ENCODE measurements at regions of chr5 and their contacts with region 1.

Region 1: DNA sequence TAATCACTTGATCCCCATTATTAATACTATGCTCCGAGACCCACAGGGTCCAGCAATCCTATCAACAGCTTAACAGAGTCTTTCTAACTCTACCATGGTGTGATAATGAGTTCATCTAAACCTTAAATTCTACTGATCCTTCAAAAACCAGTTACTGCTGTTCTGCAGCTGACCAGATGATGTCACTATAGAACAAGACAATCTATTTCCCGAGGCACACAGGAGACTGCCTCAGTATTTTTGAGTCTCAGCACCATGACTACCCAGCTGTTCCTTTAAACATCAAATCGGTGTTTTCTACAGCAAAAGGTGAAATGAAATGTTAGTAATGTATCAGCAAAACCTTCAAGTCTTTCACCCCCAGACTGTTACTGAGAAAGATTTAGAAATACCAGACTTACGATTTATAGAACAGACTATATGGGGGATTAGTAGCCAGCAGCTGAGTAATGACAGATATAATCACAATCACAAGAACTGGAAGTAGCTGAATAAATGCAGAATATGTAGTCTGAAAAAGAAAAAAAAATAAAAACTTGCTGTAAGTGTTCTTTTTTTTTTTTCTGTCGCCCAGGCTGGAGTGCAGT is 16.9 kb downstream of the DNAJC18 start:
- DNase-seq: peak; percentile 6 to 73 (median 66)
- H3K4me3 ChIP-seq: no peak overlapping the region
- H3K4me3 Mint-ChIP-seq: no peak overlapping the region
- H3K27ac ChIP-seq: no peak overlapping the region
- H3K27ac Mint-ChIP-seq: peak overlapping the region in 5 of 8 donors; percentile 44 to 82 (median 56)
- H3K4me1 ChIP-seq: no peaks in the 10 kb centered on the region
- H3K4me1 Mint-ChIP-seq: peaks cover 3 to 6% (median 4%) of the 10 kb centered on the region in 3 donors
- H3K27me3 ChIP-seq: no peaks in the 10 kb centered on the region
- H3K27me3 Mint-ChIP-seq: peaks cover 0 to 2% of the 10 kb centered on the region in 2 donors

Region 2: DNA sequence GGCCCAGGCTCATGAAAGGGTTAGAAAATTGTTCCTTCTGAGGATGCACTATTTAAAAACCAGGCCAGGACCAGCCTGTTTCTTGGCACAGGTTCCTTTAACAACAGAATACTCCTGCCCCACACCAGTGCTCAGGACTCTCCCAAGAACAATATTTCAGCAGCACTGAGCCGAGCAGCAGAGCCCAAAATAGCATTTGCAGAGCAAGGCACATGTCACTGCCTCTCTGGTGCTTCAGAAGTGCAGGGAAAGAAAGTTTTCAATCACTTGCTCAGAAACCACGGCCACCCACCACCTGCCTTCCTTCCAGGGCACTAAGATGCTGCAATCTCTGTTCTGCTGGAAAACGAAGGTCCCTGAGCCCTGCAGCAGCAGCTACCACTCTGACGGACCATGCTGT is 301.9 kb before region 1 on chr5:
- CTCF ChIA-PET with region 1: no interaction called
- POLR2A ChIA-PET with region 1: no interaction called
- DNase-seq: no peak
- H3K4me3 ChIP-seq: no peak overlapping the region
- H3K4me3 Mint-ChIP-seq: no peak overlapping the region
- H3K27ac ChIP-seq: no peak overlapping the region
- H3K27ac Mint-ChIP-seq: no peak overlapping the region
- H3K4me1 ChIP-seq: no peaks in the 10 kb centered on the region
- H3K4me1 Mint-ChIP-seq: no peaks in the 10 kb centered on the region
- H3K27me3 ChIP-seq: no peaks in the 10 kb centered on the region
- H3K27me3 Mint-ChIP-seq: no peaks in the 10 kb centered on the region

Region 3: DNA sequence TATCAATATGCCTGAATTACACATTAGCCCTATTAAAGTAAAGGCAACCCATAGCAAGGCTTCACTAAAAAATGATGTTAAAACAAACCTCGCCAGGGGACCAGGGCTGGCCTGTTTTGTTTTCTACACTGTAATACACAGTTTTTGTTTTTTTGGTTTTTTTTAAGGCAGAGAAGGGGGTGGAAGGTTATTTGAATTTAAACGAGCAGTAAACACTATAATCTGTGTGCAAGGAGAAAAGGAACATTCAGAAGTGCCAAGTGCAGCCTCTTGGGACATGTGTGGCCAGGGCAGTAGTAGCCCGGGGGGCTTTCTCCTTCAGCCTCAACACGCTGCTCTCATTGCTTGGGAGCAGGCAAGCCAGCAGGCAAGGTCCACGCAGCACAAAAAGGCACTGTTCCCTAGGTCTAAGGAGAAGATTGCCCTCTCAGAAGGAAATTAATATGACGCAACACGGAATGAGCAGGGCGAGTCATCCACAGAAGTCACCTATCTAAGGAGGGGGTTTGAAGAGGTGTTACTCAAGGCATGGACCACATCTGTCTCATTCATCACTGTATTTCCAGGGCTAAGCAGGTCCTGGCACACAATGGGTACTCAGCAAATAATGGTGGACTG is 240.5 kb before region 1 on chr5:
- CTCF ChIA-PET with region 1: no interaction called
- POLR2A ChIA-PET with region 1: no interaction called
- DNase-seq: no peak
- H3K4me3 ChIP-seq: no peak overlapping the region
- H3K4me3 Mint-ChIP-seq: no peak overlapping the region
- H3K27ac ChIP-seq: no peak overlapping the region
- H3K27ac Mint-ChIP-seq: no peak overlapping the region
- H3K4me1 ChIP-seq: no peaks in the 10 kb centered on the region
- H3K4me1 Mint-ChIP-seq: peaks cover 4 to 15% (median 8%) of the 10 kb centered on the region in 3 donors
- H3K27me3 ChIP-seq: no peaks in the 10 kb centered on the region
- H3K27me3 Mint-ChIP-seq: no peaks in the 10 kb centered on the region

Region 4: GRCh38 chr5:139273572-139274289 is 148.7 kb before region 1 on chr5:
- CTCF ChIA-PET with region 1: no interaction called
- POLR2A ChIA-PET with region 1: no interaction called
- DNase-seq: peak; percentile 80 to 89 (median 86)
- H3K4me3 ChIP-seq: peak overlapping the region; percentile 89
- H3K4me3 Mint-ChIP-seq: peak overlapping the region; percentile 83 to 94 (median 89)
- H3K27ac ChIP-seq: peak overlapping the region; percentile 67
- H3K27ac Mint-ChIP-seq: peak overlapping the region; percentile 51 to 94 (median 78)
- H3K4me1 ChIP-seq: peaks cover 47% of the 10 kb centered on the region
- H3K4me1 Mint-ChIP-seq: peaks cover 48 to 62% (median 54%) of the 10 kb centered on the region in 3 donors
- H3K27me3 ChIP-seq: no peaks in the 10 kb centered on the region
- H3K27me3 Mint-ChIP-seq: peaks cover 0 to 3% of the 10 kb centered on the region in 2 donors

Region 5: DNA sequence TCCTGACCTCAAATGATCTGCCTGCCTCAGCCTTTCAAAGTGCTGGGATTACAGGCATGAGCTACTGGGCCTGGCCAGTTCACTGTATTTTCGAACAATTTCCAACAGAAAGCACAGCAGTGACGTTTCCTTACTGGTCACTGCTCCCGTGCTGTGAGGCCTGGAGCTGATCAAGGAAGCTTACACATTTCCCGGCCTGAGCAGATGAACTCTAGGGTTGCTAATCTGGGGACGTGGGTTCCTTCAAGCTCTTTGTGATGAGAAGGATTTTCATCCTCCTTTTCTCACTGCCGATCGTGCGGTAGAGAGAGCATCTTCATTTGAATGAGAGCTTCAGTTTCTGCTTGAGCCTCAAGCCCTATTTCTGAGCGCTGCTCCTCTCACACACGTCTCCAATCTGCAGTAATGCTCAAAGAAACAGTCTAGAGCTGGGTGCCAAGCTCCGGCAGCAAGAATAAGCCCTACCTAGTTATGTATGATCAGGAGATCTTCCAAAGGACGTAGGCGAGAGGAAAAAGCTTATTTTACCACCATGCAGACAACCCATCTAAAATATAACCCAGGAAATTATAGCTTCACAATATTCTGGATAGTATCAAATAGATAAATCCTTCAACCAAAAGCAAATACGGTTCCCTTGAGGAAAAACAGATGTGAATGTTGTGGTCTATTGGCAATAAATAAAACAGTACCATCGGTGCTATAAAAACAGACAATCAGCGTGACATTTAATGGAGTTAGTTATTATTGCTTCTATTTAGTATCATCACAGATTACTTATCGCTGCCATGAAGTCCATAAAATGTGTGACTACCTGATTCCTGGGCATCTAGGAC is 11.2 kb before region 1 on chr5:
- CTCF ChIA-PET with region 1: interaction called, 14 read pairs
- POLR2A ChIA-PET with region 1: no interaction called
- DNase-seq: no peak
- H3K4me3 ChIP-seq: no peak overlapping the region
- H3K4me3 Mint-ChIP-seq: no peak overlapping the region
- H3K27ac ChIP-seq: no peak overlapping the region
- H3K27ac Mint-ChIP-seq: peak overlapping the region in 1 of 8 donors; percentile 47
- H3K4me1 ChIP-seq: peaks cover 11% of the 10 kb centered on the region
- H3K4me1 Mint-ChIP-seq: no peaks in the 10 kb centered on the region
- H3K27me3 ChIP-seq: no peaks in the 10 kb centered on the region
- H3K27me3 Mint-ChIP-seq: no peaks in the 10 kb centered on the region

Region 6: DNA sequence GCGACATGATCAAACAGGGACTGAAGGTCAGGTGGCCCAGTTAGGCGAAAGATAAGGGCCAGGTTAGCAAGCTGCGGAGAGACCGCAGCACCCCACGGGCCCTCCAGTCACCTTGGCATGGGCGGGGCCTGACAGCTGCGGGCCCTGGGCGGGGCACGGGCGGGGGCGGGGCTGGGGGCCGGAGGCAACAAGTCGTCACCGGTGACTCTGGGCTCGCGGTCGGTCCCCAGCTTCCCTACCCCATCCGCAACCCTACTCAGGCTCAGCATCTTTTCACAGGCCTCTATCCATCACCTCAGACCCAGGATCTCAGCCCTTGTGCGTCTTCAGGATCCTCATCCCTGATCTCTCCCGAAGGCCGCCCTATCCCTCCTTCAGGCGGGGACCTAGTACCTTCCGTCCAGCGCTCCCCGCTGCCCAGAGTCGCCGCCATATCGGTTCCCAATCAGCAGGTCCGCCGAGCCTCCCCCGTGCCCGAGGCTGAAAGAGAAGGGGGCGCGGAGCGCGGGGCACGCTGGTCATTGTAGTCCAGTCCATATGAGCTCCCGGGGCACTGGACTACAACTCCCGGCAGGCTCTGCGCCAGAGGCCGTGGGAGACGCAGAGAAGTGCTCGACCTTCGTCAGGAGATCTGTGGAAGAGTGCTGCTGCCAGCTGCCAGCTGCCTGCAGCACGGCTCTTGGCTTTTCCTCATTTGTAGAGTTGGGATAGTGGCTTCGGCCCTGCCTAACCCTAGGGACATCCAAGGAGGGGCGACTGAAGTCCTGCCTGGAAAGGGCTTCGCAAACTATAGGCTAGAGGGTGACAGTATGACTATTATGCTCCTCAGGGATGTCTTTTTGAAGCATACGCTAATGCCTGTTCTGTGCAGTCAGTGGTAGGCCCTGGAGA is 16.9 kb after region 1 on chr5 and contains the start of gene DNAJC18:
- CTCF ChIA-PET with region 1: interaction called, 29 read pairs
- POLR2A ChIA-PET with region 1: interaction called, 4 read pairs
- DNase-seq: peak; percentile 81 to 91 (median 84)
- H3K4me3 ChIP-seq: peak within 1 kb of the TSS; percentile 98
- H3K4me3 Mint-ChIP-seq: peak within 1 kb of the TSS; percentile 95 to 99 (median 98)
- H3K27ac ChIP-seq: peak within 1 kb of the TSS; percentile 95
- H3K27ac Mint-ChIP-seq: peak within 1 kb of the TSS; percentile 94 to 100 (median 99)
- H3K4me1 ChIP-seq: peaks cover 29% of the 10 kb centered on the region
- H3K4me1 Mint-ChIP-seq: peaks cover 31 to 47% (median 45%) of the 10 kb centered on the region in 3 donors
- H3K27me3 ChIP-seq: no peaks in the 10 kb centered on the region
- H3K27me3 Mint-ChIP-seq: no peaks in the 10 kb centered on the region
- total RNA-seq, gene DNAJC18: 25.3 to 25.7 TPM